GM10248 (cell line): ENCODE measurements at regions of chr10 and their contacts with region 1.

Region 1: DNA sequence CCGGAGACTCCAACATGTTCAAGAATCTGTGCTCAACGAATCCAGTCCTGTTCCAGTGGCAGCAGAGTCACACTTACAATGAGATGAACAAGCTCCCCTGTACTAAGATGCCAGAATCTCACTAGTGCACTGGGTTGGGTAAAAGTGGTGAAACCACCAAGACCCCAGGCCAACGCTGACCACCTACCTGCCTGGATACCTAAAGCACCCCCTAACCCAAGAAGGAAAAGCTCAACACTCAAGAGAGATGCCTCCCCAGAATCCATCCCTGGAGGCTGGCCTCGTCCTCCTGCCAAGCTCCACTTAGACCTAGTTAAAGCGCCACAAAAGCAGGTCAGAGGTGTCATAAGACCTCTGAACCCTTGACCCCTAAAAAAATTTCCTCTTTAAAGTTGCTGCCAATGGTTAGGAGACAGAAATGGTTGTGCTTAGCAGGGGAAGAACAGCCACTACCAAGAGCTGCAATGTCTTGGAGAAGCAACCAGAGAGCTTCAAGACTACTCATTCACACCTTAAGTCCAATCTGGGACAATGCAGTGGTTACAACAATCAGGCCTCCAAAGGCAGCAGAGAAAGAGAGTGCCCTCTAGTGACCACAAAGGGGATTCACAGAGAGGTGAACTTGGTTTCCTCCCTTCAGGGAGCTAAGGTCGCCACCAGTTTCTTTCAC is 94.6 kb upstream of the MACROH2A2 start:
- DNase-seq: peak; percentile 76
- CTCF ChIP-seq: peak; percentile 89

Region 2: GRCh38 chr10:69800109-69800508 is 157.9 kb before region 1 on chr10:
- CTCF ChIA-PET with region 1: no interaction called
- POLR2A ChIA-PET with region 1: no interaction called
- DNase-seq: no peak
- CTCF ChIP-seq: peak; percentile 30

Region 3: DNA sequence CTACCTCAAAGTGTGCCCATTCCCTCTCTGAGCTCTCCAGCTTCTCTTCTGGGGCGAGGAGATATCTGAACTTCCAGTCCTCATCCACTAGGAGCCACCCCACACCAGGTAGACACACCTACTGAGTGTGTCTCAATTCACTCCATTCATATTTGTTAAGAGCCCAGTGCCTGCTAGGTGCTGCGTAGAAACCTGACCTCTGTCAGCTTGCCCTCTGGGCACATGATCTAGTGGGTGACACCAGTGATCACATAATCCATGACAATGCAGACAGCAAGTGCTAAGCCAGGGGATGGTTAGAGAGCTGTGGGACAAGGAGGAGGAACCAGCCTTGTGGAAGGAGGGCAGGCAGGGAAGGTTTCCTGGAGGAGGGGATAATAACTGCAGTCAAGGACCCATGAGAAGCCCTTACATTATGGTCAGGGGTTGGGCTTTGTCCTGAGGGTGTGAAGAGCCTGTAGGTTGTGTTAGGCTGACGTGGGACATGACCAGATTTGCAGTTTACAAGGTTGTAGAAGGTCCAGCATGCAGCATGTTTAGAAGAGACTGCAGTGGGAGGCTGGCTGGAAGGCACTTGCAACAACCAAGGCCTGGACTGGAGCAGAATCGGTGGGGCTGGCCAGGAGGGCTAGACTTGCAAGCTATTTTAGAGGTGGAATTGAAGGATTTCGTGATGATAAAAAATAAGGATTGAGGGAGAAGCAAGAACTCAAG is 74.6 kb before region 1 on chr10:
- CTCF ChIA-PET with region 1: interaction called, 10 read pairs
- POLR2A ChIA-PET with region 1: no interaction called
- DNase-seq: no peak
- CTCF ChIP-seq: no peak

Region 4: GRCh38 chr10:69936091-69936490 is 21.9 kb before region 1 on chr10:
- CTCF ChIA-PET with region 1: interaction called, 71 read pairs
- POLR2A ChIA-PET with region 1: no interaction called
- DNase-seq: peak; percentile 51
- CTCF ChIP-seq: peak; percentile 41

Region 5: GRCh38 chr10:69968830-69969229 is 10.8 kb after region 1 on chr10:
- CTCF ChIA-PET with region 1: interaction called, 27 read pairs
- POLR2A ChIA-PET with region 1: no interaction called
- DNase-seq: no peak
- CTCF ChIP-seq: peak; percentile 6

Region 6: GRCh38 chr10:69974551-69975155 is 16.6 kb after region 1 on chr10:
- CTCF ChIA-PET with region 1: interaction called, 27 read pairs
- POLR2A ChIA-PET with region 1: no interaction called
- DNase-seq: no peak
- CTCF ChIP-seq: no peak